K562 (cell line): ENCODE measurements at regions of chr7 and their contacts with region 1.

Region 1: GRCh38 chr7:158750702-158751101 is 46.1 kb upstream of the NCAPG2 start:
- DNase-seq: no peak
- ATAC-seq: no peak
- H3K4me3 ChIP-seq: no peak overlapping the region
- H3K27ac ChIP-seq: no peak overlapping the region
- H3K4me1 ChIP-seq: no peaks in the 10 kb centered on the region; a peak in 2 of 5 replicates
- H3K27me3 ChIP-seq: no peaks in the 10 kb centered on the region
- CTCF ChIP-seq: no peak
- EP300 ChIP-seq: no peak
- POLR2A ChIP-seq: no peak
- RAD21 ChIP-seq: no peak

Region 2: GRCh38 chr7:158695726-158696452 is 54.8 kb before region 1 on chr7:
- CTCF ChIA-PET with region 1: no interaction called
- POLR2A ChIA-PET with region 1: no interaction called
- in situ Hi-C with region 1: no loop called
- intact Hi-C with region 1: no loop called
- DNase-seq: peak in 3 of 4 experiments; percentile 23 to 67 (median 54)
- ATAC-seq: peak; percentile 72
- H3K4me3 ChIP-seq: no peak overlapping the region
- H3K27ac ChIP-seq: no peak overlapping the region
- H3K4me1 ChIP-seq: peaks cover under 1 to 3% of the 10 kb centered on the region in 2 experiments; a peak in 1 of 5 replicates
- H3K27me3 ChIP-seq: no peaks in the 10 kb centered on the region
- CTCF ChIP-seq: peak; percentile 65 to 89 (median 78)
- EP300 ChIP-seq: no peak
- POLR2A ChIP-seq: no peak
- RAD21 ChIP-seq: peak; percentile 86 to 97

Region 3: DNA sequence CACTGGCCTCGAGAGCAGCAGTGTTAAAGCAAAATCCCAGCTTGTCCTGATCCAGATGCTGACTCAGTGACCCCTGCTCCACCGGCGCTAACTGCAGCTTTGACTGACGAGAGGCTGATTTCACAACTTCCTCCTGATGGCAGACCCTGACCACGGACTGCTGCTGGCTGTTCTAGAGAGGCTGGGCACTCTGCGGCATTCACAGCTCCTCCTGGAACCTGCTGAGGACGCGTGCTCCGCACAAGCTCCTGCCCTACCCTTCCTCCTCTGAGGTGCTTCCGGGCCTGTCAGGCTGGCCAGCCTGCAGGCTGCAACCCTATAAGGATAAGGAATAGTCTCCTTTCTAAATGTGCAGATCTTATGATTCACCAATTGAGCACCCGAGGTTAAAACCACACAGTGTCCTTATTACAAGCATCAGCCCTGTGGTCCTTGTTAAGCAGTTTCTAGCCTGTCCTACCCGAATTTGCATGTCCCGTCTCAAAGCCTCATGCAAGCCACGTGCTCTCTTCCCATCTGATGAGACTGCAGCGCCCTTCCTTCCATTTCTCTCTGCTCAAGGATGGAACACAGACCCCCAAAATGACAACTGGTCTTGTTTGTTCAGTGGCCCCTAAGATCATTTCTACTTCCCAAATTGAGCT is 10.6 kb before region 1 on chr7:
- CTCF ChIA-PET with region 1: no interaction called
- POLR2A ChIA-PET with region 1: interaction called, 22 read pairs
- in situ Hi-C with region 1: no loop called
- intact Hi-C with region 1: no loop called
- DNase-seq: peak in 2 of 4 experiments; percentile 48 to 58
- ATAC-seq: peak; percentile 47
- H3K4me3 ChIP-seq: no peak overlapping the region
- H3K27ac ChIP-seq: peak overlapping the region; percentile 71
- H3K4me1 ChIP-seq: peaks cover 22 to 32% of the 10 kb centered on the region in 2 experiments; a peak in 4 of 5 replicates
- H3K27me3 ChIP-seq: no peaks in the 10 kb centered on the region
- CTCF ChIP-seq: peak in 1 of 3 experiments; percentile 8; a peak in 1 of 6 replicates
- EP300 ChIP-seq: no peak
- POLR2A ChIP-seq: no peak
- RAD21 ChIP-seq: peak; percentile 11 to 59; a peak in 2 of 4 replicates